ENCODE measurements at regions of chr2 and their contacts with region 1.

Region 1: GRCh38 chr2:157302492-157303099 is 23.0 kb downstream of the ERMN start:
- DNase-seq: peak; percentile 33
- ATAC-seq: peak; percentile 74
- H3K4me3 Mint-ChIP-seq: no peak overlapping the region
- H3K27ac Mint-ChIP-seq: no peak overlapping the region
- H3K4me1 Mint-ChIP-seq: peaks cover 30% of the 10 kb centered on the region
- H3K27me3 Mint-ChIP-seq: no peaks in the 10 kb centered on the region
- CTCF ChIP-seq: peak; percentile 96

Region 2: DNA sequence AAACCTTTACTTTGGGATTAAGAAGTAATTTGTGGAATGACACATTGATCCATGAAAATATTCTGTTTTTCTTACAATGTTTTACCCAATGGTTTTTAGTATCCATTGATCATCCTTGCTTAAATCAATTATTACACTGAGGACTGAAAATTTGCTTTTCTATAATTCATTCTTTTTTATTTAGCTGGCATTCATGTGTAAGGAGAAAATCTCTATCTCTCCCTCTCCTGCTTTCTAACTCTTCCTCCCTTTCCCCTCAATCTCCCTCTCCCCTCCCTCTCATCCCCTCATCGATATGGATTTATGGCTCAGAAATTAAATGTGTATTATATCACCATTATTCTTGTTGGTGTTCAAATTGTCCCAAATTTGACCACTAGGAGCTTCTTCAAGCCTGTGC is 15.4 kb before region 1 on chr2:
- CTCF ChIA-PET with region 1: interaction called, 29 read pairs
- POLR2A ChIA-PET with region 1: interaction called, 3 read pairs
- intact Hi-C with region 1: no loop called
- DNase-seq: no peak
- ATAC-seq: no peak
- H3K4me3 Mint-ChIP-seq: no peak overlapping the region
- H3K27ac Mint-ChIP-seq: no peak overlapping the region
- H3K4me1 Mint-ChIP-seq: no peaks in the 10 kb centered on the region
- H3K27me3 Mint-ChIP-seq: peaks cover 2% of the 10 kb centered on the region
- CTCF ChIP-seq: no peak

Region 3: GRCh38 chr2:157336137-157337010 is 33.8 kb after region 1 on chr2:
- CTCF ChIA-PET with region 1: interaction called, 119 read pairs
- POLR2A ChIA-PET with region 1: interaction called, 5 read pairs
- intact Hi-C with region 1: no loop called
- DNase-seq: peak; percentile 69
- ATAC-seq: no peak
- H3K4me3 Mint-ChIP-seq: peak overlapping the region; percentile 42
- H3K27ac Mint-ChIP-seq: peak overlapping the region; percentile 14
- H3K4me1 Mint-ChIP-seq: peaks cover 63% of the 10 kb centered on the region
- H3K27me3 Mint-ChIP-seq: no peaks in the 10 kb centered on the region
- CTCF ChIP-seq: peak; percentile 91

Region 4: GRCh38 chr2:157433394-157433793 is 130.8 kb after region 1 on chr2:
- CTCF ChIA-PET with region 1: interaction called, 10 read pairs
- POLR2A ChIA-PET with region 1: interaction called, 3 read pairs
- intact Hi-C with region 1: no loop called
- DNase-seq: no peak
- ATAC-seq: no peak
- H3K4me3 Mint-ChIP-seq: peak overlapping the region; percentile 90
- H3K27ac Mint-ChIP-seq: peak overlapping the region; percentile 94
- H3K4me1 Mint-ChIP-seq: peaks cover 51% of the 10 kb centered on the region
- H3K27me3 Mint-ChIP-seq: no peaks in the 10 kb centered on the region
- CTCF ChIP-seq: no peak

Region 5: DNA sequence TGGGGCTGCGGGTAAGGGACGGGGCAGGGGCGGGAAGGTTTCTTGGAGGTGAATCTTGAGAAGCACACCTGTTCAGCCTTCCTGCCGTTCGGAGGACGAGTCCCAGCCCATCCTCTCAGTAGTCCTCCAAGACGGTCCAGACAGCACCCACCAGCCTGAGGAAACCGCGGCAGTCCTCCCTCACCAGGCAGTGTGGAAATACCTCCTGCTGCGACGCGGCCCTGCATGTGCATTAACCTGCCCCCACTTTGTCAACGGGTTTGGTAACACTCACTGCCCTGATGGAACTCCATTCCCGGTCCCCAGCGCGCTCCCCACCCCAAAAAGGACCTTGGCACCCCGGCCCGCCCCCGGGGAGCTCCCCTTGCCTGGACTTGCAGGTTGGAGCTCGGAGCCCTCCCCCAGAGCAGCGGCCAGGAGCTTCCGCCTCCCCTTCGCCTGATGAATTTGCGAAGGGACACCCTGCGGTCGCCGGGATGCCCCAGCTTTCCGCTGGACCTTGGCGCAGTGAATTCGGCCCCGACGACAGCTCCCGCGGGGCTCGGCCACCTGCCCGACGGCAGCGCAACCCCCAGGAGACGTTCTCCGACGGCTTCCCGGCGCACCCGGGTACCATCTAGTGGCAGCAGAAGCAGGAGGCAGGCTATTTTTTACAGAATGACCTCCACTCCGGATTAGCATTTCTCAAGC is 294.5 kb after region 1 on chr2:
- CTCF ChIA-PET with region 1: interaction called, 72 read pairs
- POLR2A ChIA-PET with region 1: no interaction called
- intact Hi-C with region 1: loop called (anchors 5 kb)
- DNase-seq: peak; percentile 71
- ATAC-seq: peak; percentile 90
- H3K4me3 Mint-ChIP-seq: peak overlapping the region; percentile 55
- H3K27ac Mint-ChIP-seq: no peak overlapping the region
- H3K4me1 Mint-ChIP-seq: peaks cover 10% of the 10 kb centered on the region
- H3K27me3 Mint-ChIP-seq: peaks cover 11% of the 10 kb centered on the region
- CTCF ChIP-seq: peak; percentile 71

Region 6: DNA sequence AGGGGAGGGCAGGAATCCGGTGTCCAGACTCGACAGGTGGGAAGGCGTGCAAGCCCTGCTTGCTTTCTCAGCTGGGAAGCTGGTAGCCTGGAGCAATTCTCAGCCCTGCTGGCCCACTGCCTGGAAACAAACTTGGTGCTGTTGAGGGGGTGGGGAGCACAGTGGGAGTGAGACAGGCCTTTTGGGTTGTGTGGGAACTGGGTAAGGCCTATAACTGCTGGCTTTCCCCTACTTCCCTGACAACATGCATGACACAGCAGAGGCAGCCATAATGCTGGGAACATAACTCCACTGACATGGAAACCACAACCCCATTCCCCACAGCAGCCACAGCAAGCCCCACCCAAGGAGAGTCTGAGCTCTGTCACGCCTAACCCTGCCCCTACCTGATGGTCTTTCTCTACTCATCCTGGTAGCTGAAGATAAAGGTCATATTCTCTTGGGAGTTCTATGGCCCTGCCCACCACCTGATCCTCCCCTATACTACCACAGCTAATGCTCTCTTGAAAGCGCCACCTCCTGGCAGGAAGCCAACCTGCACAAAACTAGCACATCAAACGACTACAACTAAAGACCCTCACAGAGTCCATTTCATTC is 449.0 kb after region 1 on chr2:
- CTCF ChIA-PET with region 1: interaction called, 25 read pairs
- POLR2A ChIA-PET with region 1: no interaction called
- intact Hi-C with region 1: loop called (anchors 10 kb)
- DNase-seq: peak; percentile 65
- ATAC-seq: peak; percentile 74
- H3K4me3 Mint-ChIP-seq: no peak overlapping the region
- H3K27ac Mint-ChIP-seq: no peak overlapping the region
- H3K4me1 Mint-ChIP-seq: peaks cover 22% of the 10 kb centered on the region
- H3K27me3 Mint-ChIP-seq: no peaks in the 10 kb centered on the region
- CTCF ChIP-seq: peak; percentile 50